ENCODE measurements at regions of chr20 and their contacts with region 1.

Region 1: GRCh38 chr20:17569616-17570346 is at the start of gene DSTN:
- DNase-seq: peak; percentile 92
- ATAC-seq: peak; percentile 89
- H3K4me3 Mint-ChIP-seq: peak within 1 kb of the TSS; percentile 88
- H3K27ac Mint-ChIP-seq: peak within 1 kb of the TSS; percentile 88
- H3K4me1 Mint-ChIP-seq: peaks cover 26% of the 10 kb centered on the region
- H3K27me3 Mint-ChIP-seq: peaks cover 7% of the 10 kb centered on the region
- total RNA-seq, gene DSTN: 66.2 to 68.4 TPM

Region 2: DNA sequence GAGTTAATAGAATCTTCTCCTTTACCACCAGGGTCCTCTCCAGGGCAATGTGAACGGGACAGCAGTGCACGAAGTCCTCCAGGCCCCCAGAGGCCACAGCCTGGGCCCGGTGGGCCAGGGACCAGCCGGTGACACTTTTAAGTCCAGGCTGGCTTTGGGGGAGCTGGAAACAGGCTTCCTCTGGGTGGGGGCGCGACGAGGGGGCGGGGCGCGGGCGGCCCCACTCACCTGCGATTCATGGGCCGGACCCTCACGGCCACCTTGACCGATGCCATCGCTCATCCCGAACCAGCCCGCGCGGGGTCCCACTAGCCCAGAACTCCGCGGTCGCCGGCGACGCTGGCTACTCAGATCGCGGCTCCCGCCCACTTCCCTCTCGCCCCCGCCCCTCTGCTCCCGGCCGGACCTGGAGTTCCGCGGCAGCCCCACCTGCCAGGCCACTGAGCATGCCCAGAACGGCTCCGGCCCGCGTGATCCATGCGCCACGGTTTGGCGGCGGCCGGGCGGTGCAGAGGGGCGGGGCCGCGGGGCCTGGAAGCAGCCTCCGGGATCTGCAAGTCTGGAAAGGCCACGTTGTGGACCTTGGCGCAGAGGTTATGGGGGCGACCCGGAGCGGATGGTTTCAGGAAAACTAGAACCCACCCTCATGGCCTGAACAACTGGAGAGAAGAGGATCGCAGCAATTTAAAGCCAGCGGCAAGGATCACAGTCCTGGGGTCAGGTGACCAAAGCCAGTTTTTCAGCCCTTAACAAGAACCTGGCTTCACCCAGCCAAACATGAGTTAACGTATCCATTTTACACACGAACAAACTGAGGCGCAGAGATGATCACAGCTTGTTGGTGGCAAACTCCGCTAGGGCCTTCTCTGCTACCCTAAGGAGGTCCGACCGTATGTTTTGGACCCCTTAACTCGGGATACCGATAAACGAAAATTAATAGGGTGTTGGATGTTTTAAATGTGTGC is 996.5 kb before region 1 on chr20 and contains the start of gene KIF16B:
- CTCF ChIA-PET with region 1: no interaction called
- POLR2A ChIA-PET with region 1: no interaction called
- intact Hi-C with region 1: loop called in 1 of 2 experiments (anchors 10 kb)
- DNase-seq: peak; percentile 92
- ATAC-seq: peak; percentile 87
- H3K4me3 Mint-ChIP-seq: peak within 1 kb of the TSS; percentile 85
- H3K27ac Mint-ChIP-seq: peak within 1 kb of the TSS; percentile 79
- H3K4me1 Mint-ChIP-seq: peaks cover 42% of the 10 kb centered on the region
- H3K27me3 Mint-ChIP-seq: no peaks in the 10 kb centered on the region
- total RNA-seq, gene KIF16B: 7.5 to 8.7 TPM

Region 3: GRCh38 chr20:17530716-17531664 is 38.8 kb before region 1 on chr20 and contains the start of gene BFSP1:
- CTCF ChIA-PET with region 1: interaction called, 3 read pairs
- POLR2A ChIA-PET with region 1: no interaction called
- intact Hi-C with region 1: loop called (anchors 1 to 2 kb)
- DNase-seq: peak; percentile 78
- ATAC-seq: peak; percentile 81
- H3K4me3 Mint-ChIP-seq: peak within 1 kb of the TSS; percentile 70
- H3K27ac Mint-ChIP-seq: peak within 1 kb of the TSS; percentile 68
- H3K4me1 Mint-ChIP-seq: peaks cover 16% of the 10 kb centered on the region
- H3K27me3 Mint-ChIP-seq: peaks cover 8% of the 10 kb centered on the region
- total RNA-seq, gene BFSP1: 0.12 to 0.23 TPM

Region 4: DNA sequence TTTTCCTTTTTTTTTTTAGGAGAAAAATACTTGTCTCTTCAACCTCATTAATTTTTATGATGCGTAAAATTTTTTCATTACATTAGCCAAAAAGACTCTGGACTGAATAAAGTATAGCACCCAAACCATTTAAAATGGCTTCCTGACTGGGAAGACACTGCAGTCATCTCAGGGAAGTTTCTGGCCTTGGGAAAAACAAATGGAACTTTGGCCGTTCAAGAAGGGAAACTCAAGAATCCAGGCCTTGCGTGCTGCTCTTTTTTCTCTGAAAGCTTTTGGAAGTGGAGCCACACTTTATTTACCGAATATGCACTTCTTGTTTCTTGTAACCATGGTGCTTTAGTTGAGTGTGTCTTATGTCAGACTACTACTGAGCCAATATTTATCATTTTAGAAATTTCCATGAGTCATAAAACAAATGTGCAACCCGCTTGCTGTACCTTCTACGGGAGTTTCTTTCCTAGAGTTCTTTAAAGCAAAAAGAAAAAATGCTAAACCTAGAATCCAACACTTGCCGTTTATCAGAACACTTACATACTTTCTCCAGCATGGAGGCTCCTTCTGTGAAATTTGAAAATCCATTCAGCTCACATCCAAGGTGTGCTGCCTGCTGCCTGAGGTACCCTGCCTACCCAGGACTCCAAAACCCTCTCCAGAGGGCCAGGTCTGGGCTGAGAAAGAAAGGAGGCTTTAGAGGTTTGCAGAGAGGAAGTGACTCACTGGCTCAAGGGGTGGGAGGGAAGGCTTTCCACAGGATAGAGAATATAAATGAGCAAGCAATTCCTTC is 11.4 kb before region 1 on chr20:
- CTCF ChIA-PET with region 1: interaction called, 4 read pairs
- POLR2A ChIA-PET with region 1: interaction called, 4 read pairs
- intact Hi-C with region 1: loop called (anchors 1 kb)
- DNase-seq: peak; percentile 57
- ATAC-seq: peak; percentile 81
- H3K4me3 Mint-ChIP-seq: no peak overlapping the region
- H3K27ac Mint-ChIP-seq: peak overlapping the region; percentile 71
- H3K4me1 Mint-ChIP-seq: peaks cover 41% of the 10 kb centered on the region
- H3K27me3 Mint-ChIP-seq: no peaks in the 10 kb centered on the region

Region 5: GRCh38 chr20:17654649-17655285 is 85.0 kb after region 1 on chr20:
- CTCF ChIA-PET with region 1: no interaction called
- POLR2A ChIA-PET with region 1: no interaction called
- intact Hi-C with region 1: no loop called
- DNase-seq: peak; percentile 33
- ATAC-seq: no peak
- H3K4me3 Mint-ChIP-seq: no peak overlapping the region
- H3K27ac Mint-ChIP-seq: no peak overlapping the region
- H3K4me1 Mint-ChIP-seq: peaks cover 5% of the 10 kb centered on the region
- H3K27me3 Mint-ChIP-seq: no peaks in the 10 kb centered on the region

Region 6: DNA sequence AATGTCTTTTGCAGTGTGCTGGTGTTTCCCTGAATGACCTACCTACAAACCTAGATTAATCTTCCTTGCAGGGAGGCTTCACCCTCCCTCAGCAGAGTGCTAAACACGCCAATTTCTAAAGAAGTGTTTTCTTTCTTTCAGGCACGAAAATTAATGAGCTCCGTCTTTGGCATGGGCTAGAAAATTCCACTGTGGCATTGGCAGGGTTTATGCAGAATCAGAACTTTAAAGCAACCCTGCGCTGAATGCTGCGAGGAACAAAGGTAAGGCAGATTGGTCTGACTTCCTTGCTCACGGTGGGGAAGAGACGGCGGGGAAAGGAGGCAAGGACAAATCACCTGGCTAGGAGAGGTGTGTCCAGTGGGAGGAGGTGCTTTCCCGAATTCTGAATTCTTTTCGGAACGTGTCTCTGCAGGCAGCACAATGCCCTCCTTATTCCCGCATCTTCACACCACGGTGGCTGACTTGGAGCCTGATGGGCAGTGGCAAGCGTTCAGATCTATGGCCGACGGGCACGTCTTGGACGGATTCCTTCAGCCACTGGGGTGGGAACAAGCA is 123.7 kb after region 1 on chr20:
- CTCF ChIA-PET with region 1: no interaction called
- POLR2A ChIA-PET with region 1: no interaction called
- intact Hi-C with region 1: no loop called
- DNase-seq: no peak
- ATAC-seq: no peak
- H3K4me3 Mint-ChIP-seq: no peak overlapping the region
- H3K27ac Mint-ChIP-seq: no peak overlapping the region
- H3K4me1 Mint-ChIP-seq: no peaks in the 10 kb centered on the region
- H3K27me3 Mint-ChIP-seq: peaks cover 17% of the 10 kb centered on the region

Region 7: GRCh38 chr20:17968366-17969279 is 398.8 kb after region 1 on chr20 and contains the starts of genes MGME1 and SNX5:
- CTCF ChIA-PET with region 1: interaction called, 3 read pairs
- POLR2A ChIA-PET with region 1: interaction called, 13 read pairs
- intact Hi-C with region 1: loop called (anchors 1 to 5 kb)
- DNase-seq: peak; percentile 100
- ATAC-seq: peak; percentile 91
- H3K4me3 Mint-ChIP-seq: peak within 1 kb of the TSS; percentile 87
- H3K27ac Mint-ChIP-seq: peak within 1 kb of the TSS; percentile 99
- H3K4me1 Mint-ChIP-seq: peaks cover 49% of the 10 kb centered on the region
- H3K27me3 Mint-ChIP-seq: no peaks in the 10 kb centered on the region
- total RNA-seq, gene MGME1: 24.1 to 29.7 TPM
- total RNA-seq, gene SNX5: 204 to 227 TPM

Measured in activated CD4-positive, alpha-beta T cell treated with anti-CD3 and anti-CD28 coated beads for 36 hours (primary cell).